ENCODE measurements at regions of chr1 and their contacts with region 1.

Region 1: GRCh38 chr1:176559878-176560277 is 96.9 kb downstream of the PAPPA2 start:
- DNase-seq: no peak
- ATAC-seq: no peak
- H3K4me3 Mint-ChIP-seq: no peak overlapping the region
- H3K27ac Mint-ChIP-seq: no peak overlapping the region
- H3K4me1 Mint-ChIP-seq: no peaks in the 10 kb centered on the region
- H3K27me3 Mint-ChIP-seq: peaks cover 2% of the 10 kb centered on the region
- CTCF ChIP-seq: no peak

Region 2: DNA sequence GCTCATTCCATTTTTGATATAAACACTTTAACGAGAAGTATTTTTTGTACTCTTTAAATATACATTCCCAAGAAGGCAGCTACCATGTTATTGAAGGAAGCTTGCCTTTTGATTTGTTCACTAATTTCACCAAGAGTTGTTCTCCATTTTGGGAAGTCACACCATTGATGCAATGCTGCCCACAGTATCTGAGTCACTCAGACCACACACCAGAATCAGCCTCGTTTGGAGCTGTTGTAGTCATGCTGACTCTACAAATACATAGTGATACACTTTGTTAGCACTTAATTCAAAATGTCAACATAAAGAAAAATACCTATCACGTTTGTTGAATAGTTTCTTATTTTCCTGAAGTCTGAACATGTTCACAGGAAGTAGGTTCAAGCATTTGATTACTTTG is 18.2 kb before region 1 on chr1:
- CTCF ChIA-PET with region 1: no interaction called
- POLR2A ChIA-PET with region 1: no interaction called
- intact Hi-C with region 1: no loop called
- DNase-seq: no peak
- ATAC-seq: no peak
- H3K4me3 Mint-ChIP-seq: no peak overlapping the region
- H3K27ac Mint-ChIP-seq: no peak overlapping the region
- H3K4me1 Mint-ChIP-seq: no peaks in the 10 kb centered on the region
- H3K27me3 Mint-ChIP-seq: no peaks in the 10 kb centered on the region
- CTCF ChIP-seq: no peak

Region 3: DNA sequence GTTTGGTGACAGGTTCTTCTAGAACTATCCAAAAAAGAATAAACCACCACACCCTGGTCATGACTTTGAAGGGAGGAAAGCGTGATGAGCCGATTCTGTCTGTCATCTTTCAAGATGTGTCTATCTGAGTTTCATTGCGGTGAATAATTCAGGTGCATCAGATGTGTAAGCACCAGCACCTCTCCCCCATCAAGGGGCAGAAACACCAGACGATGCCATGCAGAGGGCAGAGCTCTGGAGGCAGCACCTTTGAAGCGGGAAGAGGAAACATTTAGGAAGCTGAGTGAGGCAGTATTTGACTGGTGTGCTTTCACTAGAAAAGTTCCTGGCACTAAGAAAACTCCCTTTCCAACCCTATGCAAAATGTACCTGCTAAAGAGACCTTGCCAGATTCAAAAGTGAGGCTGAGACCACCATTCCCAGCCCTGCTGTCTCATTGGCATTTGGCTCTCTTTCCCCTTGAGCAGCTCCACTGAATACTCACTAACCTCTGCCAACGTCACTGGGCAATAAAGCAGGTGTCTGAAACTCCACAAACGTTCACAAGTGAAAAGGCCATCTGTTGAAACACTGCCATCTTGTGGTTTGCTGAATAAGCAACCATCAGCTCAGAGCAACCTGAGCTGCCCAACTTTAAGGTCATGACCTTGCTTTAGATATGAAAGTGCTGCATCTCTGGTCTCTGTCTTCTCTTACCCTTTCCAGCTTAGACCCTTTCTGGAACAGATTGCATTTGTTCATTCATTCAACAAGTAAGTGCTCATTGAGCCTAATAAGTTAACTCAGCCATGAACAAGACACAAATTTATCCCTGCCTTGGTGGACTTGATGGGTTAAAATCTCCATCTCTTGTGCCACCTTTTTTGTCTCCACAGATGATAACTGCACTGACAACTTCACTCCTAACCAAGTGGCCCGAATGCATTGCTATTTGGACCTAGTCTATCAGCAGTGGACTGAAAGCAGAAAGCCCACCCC is 131.7 kb after region 1 on chr1:
- CTCF ChIA-PET with region 1: interaction called, 7 read pairs
- POLR2A ChIA-PET with region 1: no interaction called
- intact Hi-C with region 1: loop called (anchors 1 kb)
- DNase-seq: no peak
- ATAC-seq: no peak
- H3K4me3 Mint-ChIP-seq: no peak overlapping the region
- H3K27ac Mint-ChIP-seq: no peak overlapping the region
- H3K4me1 Mint-ChIP-seq: no peaks in the 10 kb centered on the region
- H3K27me3 Mint-ChIP-seq: peaks cover 7% of the 10 kb centered on the region
- CTCF ChIP-seq: no peak

Region 4: GRCh38 chr1:176880954-176881595 is 321.2 kb after region 1 on chr1:
- CTCF ChIA-PET with region 1: no interaction called
- POLR2A ChIA-PET with region 1: no interaction called
- intact Hi-C with region 1: loop called (anchors 2 kb)
- DNase-seq: no peak
- ATAC-seq: no peak
- H3K4me3 Mint-ChIP-seq: no peak overlapping the region
- H3K27ac Mint-ChIP-seq: no peak overlapping the region
- H3K4me1 Mint-ChIP-seq: no peaks in the 10 kb centered on the region
- H3K27me3 Mint-ChIP-seq: peaks cover 5% of the 10 kb centered on the region
- CTCF ChIP-seq: peak; percentile 43

Measured in activated B cell treated with CpG ODN at 0.5 μM for 24 hours (primary cell).